PC-3 (cell line): ENCODE measurements at regions of chr2 and their contacts with region 1.

Region 1: DNA sequence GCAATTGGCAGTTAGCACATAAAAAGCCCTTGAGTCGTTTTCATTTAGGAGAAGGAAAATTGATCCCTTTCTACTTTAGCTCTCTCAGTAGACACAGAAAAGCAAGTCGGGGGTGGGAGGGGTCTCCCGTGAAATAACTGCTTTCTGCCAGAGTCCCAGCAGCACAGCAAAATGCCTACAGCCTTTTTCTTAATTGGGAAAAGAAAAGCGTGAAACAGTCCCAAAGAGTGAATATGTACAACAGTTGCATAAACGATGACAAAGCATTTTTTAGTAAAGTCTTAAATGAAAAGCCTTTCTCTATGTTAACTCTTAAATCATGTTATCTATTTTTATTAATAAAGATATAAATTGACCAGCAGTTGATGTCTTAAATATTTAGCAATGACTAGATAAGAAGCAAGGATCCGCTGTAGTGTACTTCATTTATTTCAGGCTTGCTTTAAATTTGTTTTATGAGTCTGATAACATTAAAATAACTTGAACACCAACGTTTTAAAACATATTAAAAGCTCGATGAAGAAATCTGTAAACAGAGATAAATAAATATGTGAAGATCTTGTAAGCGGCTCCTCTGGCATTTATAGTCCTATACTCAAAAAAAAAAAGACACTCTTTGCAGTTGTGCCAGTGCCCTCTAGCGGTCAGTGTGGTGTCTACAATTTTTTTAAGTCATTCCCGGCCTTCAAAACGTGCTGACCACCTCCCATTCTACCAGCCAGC is 42.3 kb upstream of the ATIC start:
- DNase-seq: peak; percentile 82
- ATAC-seq: peak; percentile 31
- H3K4me3 ChIP-seq: no peak overlapping the region
- H3K27ac ChIP-seq: no peak overlapping the region
- H3K4me1 ChIP-seq: no peaks in the 10 kb centered on the region
- H3K27me3 ChIP-seq: no peaks in the 10 kb centered on the region
- CTCF ChIP-seq: peak; percentile 88

Region 2: DNA sequence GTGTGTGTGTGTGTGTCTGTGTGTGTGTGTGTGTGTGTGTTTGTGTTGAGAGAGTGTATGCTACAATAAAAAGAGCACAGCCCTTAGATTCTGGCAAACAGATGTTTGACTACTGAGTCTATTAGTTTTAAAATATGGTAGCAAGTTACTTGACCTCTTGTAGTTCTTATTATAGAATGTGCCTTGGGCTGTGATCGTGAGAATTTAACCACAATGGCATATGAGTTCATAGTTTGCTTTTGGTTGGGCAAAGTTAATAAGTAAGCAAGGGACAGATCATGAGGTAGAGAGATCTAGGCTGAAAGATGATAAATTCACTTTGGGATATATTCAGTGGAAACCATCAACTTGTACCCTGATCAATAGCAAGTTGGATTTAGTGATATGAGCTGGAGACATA is 1193.0 kb before region 1 on chr2:
- CTCF ChIA-PET with region 1: no interaction called
- POLR2A ChIA-PET with region 1: no interaction called
- intact Hi-C with region 1: loop called (anchors 5 kb)
- DNase-seq: peak; percentile 80
- ATAC-seq: peak; percentile 81
- H3K4me3 ChIP-seq: no peak overlapping the region
- H3K27ac ChIP-seq: peak overlapping the region; percentile 48
- H3K4me1 ChIP-seq: peaks cover 27% of the 10 kb centered on the region
- H3K27me3 ChIP-seq: no peaks in the 10 kb centered on the region
- CTCF ChIP-seq: no peak

Region 3: GRCh38 chr2:214410918-214411554 is 858.5 kb before region 1 on chr2 and contains the start of gene VWC2L:
- CTCF ChIA-PET with region 1: no interaction called
- POLR2A ChIA-PET with region 1: interaction called, 3 read pairs
- intact Hi-C with region 1: loop called (anchors 10 kb)
- DNase-seq: peak; percentile 87
- ATAC-seq: peak; percentile 100
- H3K4me3 ChIP-seq: no peak within 1 kb of the TSS
- H3K27ac ChIP-seq: no peak within 1 kb of the TSS
- H3K4me1 ChIP-seq: 0 out of 2 replicates have a peak, but pooled peaks cover 4% of the 10 kb centered on the region
- H3K27me3 ChIP-seq: no peaks in the 10 kb centered on the region
- CTCF ChIP-seq: no peak
- total RNA-seq, gene VWC2L: not detected in 2 replicates

Region 4: DNA sequence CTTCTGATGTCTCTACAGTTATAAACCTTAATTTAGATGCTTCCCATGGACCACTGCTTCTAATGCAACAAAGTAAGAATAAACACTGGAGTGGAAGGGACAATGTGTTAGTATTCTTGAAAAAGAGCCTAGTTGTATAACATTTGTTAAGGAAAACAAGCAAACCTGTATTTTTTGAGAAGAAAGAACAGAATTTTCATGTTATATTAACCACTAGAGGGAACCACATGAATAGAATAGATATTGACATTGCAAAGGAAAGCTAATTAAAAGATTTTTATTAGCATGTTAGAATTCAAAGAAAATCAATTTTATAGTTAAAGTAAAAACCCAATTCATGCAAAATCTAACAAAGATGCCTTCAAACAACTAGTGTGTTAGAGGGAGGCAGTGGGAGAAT is 308.9 kb before region 1 on chr2:
- CTCF ChIA-PET with region 1: no interaction called
- POLR2A ChIA-PET with region 1: no interaction called
- intact Hi-C with region 1: loop called (anchors 1 kb)
- DNase-seq: peak; percentile 42
- ATAC-seq: no peak
- H3K4me3 ChIP-seq: no peak overlapping the region
- H3K27ac ChIP-seq: no peak overlapping the region
- H3K4me1 ChIP-seq: no peaks in the 10 kb centered on the region
- H3K27me3 ChIP-seq: no peaks in the 10 kb centered on the region
- CTCF ChIP-seq: peak; percentile 70

Region 5: GRCh38 chr2:215002500-215002899 is 267.1 kb before region 1 on chr2:
- CTCF ChIA-PET with region 1: no interaction called
- POLR2A ChIA-PET with region 1: no interaction called
- intact Hi-C with region 1: loop called (anchors 5 kb)
- DNase-seq: peak; percentile 59
- ATAC-seq: peak; percentile 76
- H3K4me3 ChIP-seq: no peak overlapping the region
- H3K27ac ChIP-seq: no peak overlapping the region
- H3K4me1 ChIP-seq: peaks cover 5% of the 10 kb centered on the region; the same call in 1 of the 2 replicates
- H3K27me3 ChIP-seq: no peaks in the 10 kb centered on the region
- CTCF ChIP-seq: peak; percentile 85

Region 6: DNA sequence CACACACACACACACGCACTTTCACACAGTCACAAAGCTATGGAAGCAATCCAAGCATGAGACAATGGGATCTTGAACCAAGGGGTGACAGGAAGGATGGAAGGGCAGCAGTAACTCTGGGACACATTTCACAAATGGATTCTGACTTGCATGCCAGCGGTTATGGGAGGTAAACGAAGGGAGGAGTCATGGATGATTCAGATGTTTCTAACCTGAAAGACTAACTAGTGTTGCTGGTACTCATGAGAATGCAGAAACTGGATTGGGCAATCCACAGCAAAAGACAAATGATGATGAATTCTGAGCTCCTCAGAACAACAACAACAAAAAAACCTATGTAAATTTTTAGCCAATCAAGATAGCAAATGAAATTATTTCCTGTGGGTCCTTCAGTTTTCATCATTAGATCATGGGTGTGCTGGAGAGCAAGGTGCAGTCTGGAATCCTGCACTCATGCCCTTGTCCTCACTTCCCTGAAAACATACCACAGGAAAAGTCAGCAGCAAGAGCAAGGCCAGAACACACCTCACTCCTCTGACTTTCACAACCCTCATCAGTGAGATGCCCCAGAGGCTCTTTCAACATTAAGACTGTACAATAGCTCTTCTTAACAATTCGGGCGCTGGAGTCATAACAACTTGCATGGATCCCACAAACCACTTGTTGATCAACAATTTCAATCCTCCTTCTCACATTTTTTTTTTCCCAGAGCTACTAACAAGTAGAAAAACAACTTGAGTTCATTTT is 163.8 kb before region 1 on chr2:
- CTCF ChIA-PET with region 1: no interaction called
- POLR2A ChIA-PET with region 1: no interaction called
- intact Hi-C with region 1: loop called (anchors 10 kb)
- DNase-seq: peak; percentile 79
- ATAC-seq: peak; percentile 42
- H3K4me3 ChIP-seq: no peak overlapping the region
- H3K27ac ChIP-seq: peak overlapping the region; percentile 19; the same call in 1 of the 2 replicates
- H3K4me1 ChIP-seq: no peaks in the 10 kb centered on the region
- H3K27me3 ChIP-seq: no peaks in the 10 kb centered on the region
- CTCF ChIP-seq: no peak

Region 7: GRCh38 chr2:215218599-215219577 is 50.7 kb before region 1 on chr2:
- CTCF ChIA-PET with region 1: no interaction called
- POLR2A ChIA-PET with region 1: no interaction called
- intact Hi-C with region 1: no loop called
- DNase-seq: peak; percentile 9
- ATAC-seq: no peak
- H3K4me3 ChIP-seq: no peak overlapping the region
- H3K27ac ChIP-seq: no peak overlapping the region
- H3K4me1 ChIP-seq: no peaks in the 10 kb centered on the region
- H3K27me3 ChIP-seq: no peaks in the 10 kb centered on the region
- CTCF ChIP-seq: no peak

Region 8: DNA sequence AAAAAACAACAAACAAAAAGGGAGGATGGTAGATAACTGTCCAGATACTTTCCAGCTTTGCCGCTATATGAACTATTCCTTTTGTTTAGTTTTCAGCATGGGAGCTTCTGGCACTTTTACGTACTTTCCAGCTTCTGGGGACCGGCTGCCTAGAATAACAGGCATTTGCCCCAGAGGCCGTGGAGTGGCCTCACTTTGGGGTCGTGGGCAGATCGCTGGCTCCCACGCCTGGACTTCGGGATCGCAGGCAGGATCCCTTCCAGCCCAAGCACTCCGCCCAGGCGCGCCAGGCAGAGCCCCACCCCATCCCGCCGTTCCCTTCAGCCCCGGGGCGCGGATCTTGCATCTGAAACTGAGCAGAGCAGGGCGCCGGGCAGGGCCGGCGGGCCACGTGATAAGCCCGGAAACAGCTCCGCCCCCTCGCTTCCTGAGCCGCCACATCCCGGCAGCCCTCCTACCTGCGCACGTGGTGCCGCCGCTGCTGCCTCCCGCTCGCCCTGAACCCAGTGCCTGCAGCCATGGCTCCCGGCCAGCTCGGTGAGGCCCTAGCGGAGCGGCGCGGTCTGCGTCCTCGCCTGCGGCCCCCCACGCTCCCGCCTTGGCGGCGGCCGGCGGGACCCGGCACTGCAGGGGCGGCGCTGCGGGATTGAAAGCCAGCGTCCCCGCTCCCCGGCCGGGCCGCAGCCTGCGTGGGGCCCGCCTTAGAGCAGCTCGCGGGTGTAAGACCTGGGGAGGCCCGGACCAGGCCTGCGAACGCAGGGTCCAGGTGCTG is 42.3 kb after region 1 on chr2 and contains the start of gene ATIC:
- CTCF ChIA-PET with region 1: no interaction called
- POLR2A ChIA-PET with region 1: no interaction called
- intact Hi-C with region 1: loop called (anchors 2 kb)
- DNase-seq: peak; percentile 95
- ATAC-seq: peak; percentile 98
- H3K4me3 ChIP-seq: peak within 1 kb of the TSS; percentile 96
- H3K27ac ChIP-seq: peak within 1 kb of the TSS; percentile 72
- H3K4me1 ChIP-seq: peaks cover 49% of the 10 kb centered on the region
- H3K27me3 ChIP-seq: no peaks in the 10 kb centered on the region
- CTCF ChIP-seq: no peak
- total RNA-seq, gene ATIC: 41.7 and 78.8 TPM in 2 replicates